ENCODE measurements at regions of chr10 and their contacts with region 1.

Region 1: DNA sequence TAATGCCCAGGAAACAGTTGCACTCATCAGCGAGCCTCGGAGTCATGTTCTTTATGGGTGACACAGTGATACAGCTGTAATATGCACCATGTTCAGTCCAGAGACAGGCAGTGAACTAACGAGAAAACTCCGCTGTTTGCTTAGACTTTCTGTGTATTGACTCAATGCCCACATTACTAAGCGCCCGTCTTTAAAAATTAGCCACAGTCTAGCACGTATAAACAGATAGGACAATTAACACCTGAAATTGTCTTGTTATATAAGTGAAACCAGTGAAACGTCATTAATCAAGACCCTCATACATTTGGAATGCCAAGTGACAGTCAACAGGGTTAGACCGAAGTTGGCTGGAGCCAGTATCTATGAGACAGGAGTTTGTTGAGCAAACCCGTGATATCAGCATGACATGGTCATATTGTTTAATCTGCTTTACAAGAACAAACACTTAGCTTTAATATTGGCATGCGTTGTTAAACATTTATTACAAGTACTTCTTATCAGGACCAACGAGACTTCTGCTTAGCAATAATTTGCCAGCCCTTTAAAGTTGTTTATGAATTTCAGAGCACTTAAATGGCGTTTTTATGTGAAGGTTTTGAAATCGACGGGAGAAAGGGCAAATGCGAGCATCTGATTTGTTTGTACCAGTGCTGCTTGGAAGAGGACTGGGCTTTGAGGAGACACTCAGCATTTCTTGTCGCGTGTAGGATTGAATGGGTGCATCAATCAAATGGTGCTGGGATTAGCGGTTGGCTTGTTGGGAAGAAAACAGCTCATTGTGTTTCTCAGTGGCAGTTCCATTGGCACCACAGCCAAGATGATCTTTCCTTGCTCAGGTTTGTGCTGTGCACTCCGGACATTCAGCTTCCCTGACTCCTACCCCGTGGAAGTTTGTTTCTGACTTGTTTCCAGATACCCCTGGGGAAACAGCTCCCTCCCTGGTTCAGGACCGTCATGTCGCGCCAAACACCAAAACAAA is 56.3 kb downstream of the CAMK1D start:
- DNase-seq: no peak
- ATAC-seq: no peak
- H3K4me3 Mint-ChIP-seq: no peak overlapping the region
- H3K27ac Mint-ChIP-seq: no peak overlapping the region
- H3K4me1 Mint-ChIP-seq: peaks cover 30% of the 10 kb centered on the region
- H3K27me3 Mint-ChIP-seq: no peaks in the 10 kb centered on the region

Region 2: DNA sequence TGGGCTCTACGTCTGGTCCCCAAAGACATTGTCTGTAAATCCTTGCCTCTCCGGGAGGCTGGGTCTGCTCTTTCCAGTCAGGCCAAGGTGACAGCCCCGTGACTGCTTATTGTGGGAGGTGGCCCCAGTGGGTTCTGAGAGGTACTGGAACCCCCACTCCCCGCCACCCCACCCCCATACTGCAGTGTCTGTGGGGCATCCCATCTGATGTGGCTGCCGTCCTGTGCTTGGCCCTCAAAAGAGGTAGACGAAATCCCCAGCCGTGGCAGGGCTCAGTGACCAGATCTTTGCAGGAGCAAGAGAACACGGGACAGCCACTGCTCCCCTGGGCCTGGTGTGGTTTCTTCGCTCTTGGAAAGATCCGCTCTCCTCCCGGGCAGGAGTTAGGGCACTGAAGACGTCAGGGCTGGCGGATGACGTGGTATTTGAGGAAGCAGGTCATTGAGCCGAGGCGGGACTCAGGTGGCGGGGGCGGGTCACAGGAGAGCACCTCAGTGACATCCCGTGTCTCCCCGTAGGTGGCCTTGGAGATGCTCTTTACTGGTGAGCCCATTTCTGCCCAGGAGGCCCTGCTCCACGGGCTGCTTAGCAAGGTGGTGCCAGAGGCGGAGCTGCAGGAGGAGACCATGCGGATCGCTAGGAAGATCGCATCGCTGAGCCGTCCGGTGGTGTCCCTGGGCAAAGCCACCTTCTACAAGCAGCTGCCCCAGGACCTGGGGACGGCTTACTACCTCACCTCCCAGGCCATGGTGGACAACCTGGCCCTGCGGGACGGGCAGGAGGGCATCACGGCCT is 642.7 kb before region 1 on chr10:
- CTCF ChIA-PET with region 1: no interaction called
- POLR2A ChIA-PET with region 1: no interaction called
- intact Hi-C with region 1: no loop called
- DNase-seq: no peak
- ATAC-seq: no peak
- H3K4me3 Mint-ChIP-seq: no peak overlapping the region
- H3K27ac Mint-ChIP-seq: no peak overlapping the region
- H3K4me1 Mint-ChIP-seq: peaks cover 1% of the 10 kb centered on the region
- H3K27me3 Mint-ChIP-seq: no peaks in the 10 kb centered on the region

Region 3: GRCh38 chr10:12358863-12359564 is 46.6 kb before region 1 on chr10:
- CTCF ChIA-PET with region 1: no interaction called
- POLR2A ChIA-PET with region 1: interaction called, 11 read pairs
- intact Hi-C with region 1: no loop called
- DNase-seq: peak; percentile 45
- ATAC-seq: peak; percentile 78
- H3K4me3 Mint-ChIP-seq: no peak overlapping the region
- H3K27ac Mint-ChIP-seq: no peak overlapping the region
- H3K4me1 Mint-ChIP-seq: peaks cover 44% of the 10 kb centered on the region
- H3K27me3 Mint-ChIP-seq: no peaks in the 10 kb centered on the region

Region 4: GRCh38 chr10:12369982-12370381 is 35.6 kb before region 1 on chr10:
- CTCF ChIA-PET with region 1: no interaction called
- POLR2A ChIA-PET with region 1: no interaction called
- intact Hi-C with region 1: loop called (anchors 2 to 5 kb)
- DNase-seq: no peak
- ATAC-seq: no peak
- H3K4me3 Mint-ChIP-seq: no peak overlapping the region
- H3K27ac Mint-ChIP-seq: no peak overlapping the region
- H3K4me1 Mint-ChIP-seq: peaks cover 27% of the 10 kb centered on the region
- H3K27me3 Mint-ChIP-seq: no peaks in the 10 kb centered on the region

Region 5: GRCh38 chr10:12795315-12796110 is 389.9 kb after region 1 on chr10:
- CTCF ChIA-PET with region 1: no interaction called
- POLR2A ChIA-PET with region 1: no interaction called
- intact Hi-C with region 1: no loop called
- DNase-seq: no peak
- ATAC-seq: no peak
- H3K4me3 Mint-ChIP-seq: no peak overlapping the region
- H3K27ac Mint-ChIP-seq: no peak overlapping the region
- H3K4me1 Mint-ChIP-seq: no peaks in the 10 kb centered on the region
- H3K27me3 Mint-ChIP-seq: no peaks in the 10 kb centered on the region

Measured in activated CD4-positive, alpha-beta T cell treated with anti-CD3 and anti-CD28 coated beads for 36 hours (primary cell).